ENCODE measurements at regions of chr6 and their contacts with region 1.

Region 1: GRCh38 chr6:109526905-109527628 is 44.0 kb upstream of the ZBTB24 start:
- DNase-seq: no peak
- ATAC-seq: peak in 2 of 4 donors; percentile 35 to 57
- H3K4me3 ChIP-seq: no peak overlapping the region
- H3K27ac ChIP-seq: no peak overlapping the region
- H3K4me1 ChIP-seq: no peaks in the 10 kb centered on the region
- H3K27me3 ChIP-seq: no peaks in the 10 kb centered on the region
- CTCF ChIP-seq: peak; percentile 47

Region 2: DNA sequence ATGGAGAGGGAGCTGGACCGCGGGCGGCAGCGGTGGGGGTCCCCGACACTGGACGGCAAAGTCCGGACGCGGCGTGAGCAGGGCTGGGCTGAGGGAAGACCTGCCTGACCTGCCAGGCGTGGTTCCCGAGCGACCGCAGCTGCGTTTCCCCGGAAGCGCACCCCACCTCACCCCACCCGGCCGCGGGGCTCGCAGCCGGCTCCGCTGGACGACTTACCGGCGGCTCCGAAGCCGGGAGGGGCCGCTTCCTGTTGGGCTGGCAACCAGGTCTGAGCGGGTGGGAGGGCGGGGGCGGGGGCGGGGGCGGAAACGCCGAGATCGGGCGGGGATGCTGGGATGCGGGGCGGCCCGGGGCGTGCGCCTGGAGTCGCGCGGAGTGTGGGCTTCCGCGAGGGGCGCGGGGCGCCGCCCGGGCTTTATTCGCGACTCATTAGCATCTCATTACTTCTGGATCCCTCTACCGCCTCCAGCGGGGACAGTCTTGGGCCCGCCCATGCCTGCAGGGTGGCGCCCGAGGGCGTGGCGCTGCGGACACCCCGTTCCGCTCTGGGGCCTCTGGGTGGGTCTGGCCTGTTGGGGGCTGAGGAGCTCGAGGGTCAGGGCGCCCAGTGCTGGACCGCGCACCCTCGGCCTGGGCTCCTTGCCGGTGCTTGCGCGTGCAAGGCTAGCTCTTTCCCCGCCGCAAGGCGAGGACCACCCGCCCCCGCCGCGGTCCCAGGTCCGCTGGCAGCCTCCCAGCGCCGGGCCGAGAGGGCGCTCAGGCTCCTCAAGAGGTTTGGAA is 71.4 kb before region 1 on chr6 and contains the start of gene MICAL1:
- intact Hi-C with region 1: no loop called
- DNase-seq: peak; percentile 76 to 85
- ATAC-seq: peak; percentile 70 to 79 (median 78)
- H3K4me3 ChIP-seq: peak within 1 kb of the TSS; percentile 93
- H3K27ac ChIP-seq: peak within 1 kb of the TSS; percentile 83
- H3K4me1 ChIP-seq: peaks cover 25% of the 10 kb centered on the region
- H3K27me3 ChIP-seq: no peaks in the 10 kb centered on the region
- CTCF ChIP-seq: peak; percentile 35
- total RNA-seq, gene MICAL1: 3.1 to 7.0 (median 6.0) TPM

Region 3: DNA sequence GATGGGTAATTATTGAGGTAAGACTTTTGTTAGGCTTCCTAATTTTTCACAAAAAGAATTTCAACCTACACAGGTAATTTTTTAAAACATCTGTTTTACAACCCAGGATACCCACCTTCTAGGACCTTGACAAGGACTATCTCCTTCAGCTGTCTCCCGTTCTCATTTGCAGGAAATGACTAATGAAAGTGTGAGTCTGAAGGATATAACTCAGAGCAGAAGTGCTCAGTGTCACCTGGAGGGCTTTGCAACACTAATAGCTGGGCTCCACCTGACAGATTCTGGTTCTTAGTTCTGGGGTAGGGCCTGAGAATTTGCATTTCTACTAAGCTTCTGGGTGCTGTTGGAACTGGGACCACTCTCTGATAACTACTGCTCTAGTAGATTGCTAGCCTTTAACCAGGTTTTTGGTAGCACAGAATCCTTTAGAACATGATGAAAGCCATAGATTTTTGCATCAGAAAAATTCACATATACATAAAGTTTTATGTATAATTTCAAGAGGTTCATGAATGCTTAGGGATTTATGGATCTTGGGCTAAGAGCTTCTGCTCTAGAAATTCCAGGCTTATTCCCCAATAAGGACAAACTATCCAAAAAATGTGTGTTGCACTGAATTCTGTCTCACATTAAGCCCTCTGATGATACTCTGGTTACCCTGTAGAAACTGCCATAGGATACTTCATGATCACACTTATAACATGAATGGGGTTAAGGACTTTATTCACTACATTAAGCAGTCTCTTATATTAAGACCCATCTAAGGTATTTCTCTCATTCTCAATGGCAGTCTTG is 133.7 kb after region 1 on chr6:
- intact Hi-C with region 1: no loop called
- DNase-seq: no peak
- ATAC-seq: no peak
- H3K4me3 ChIP-seq: no peak overlapping the region
- H3K27ac ChIP-seq: no peak overlapping the region
- H3K4me1 ChIP-seq: no peaks in the 10 kb centered on the region
- H3K27me3 ChIP-seq: no peaks in the 10 kb centered on the region
- CTCF ChIP-seq: no peak

Region 4: DNA sequence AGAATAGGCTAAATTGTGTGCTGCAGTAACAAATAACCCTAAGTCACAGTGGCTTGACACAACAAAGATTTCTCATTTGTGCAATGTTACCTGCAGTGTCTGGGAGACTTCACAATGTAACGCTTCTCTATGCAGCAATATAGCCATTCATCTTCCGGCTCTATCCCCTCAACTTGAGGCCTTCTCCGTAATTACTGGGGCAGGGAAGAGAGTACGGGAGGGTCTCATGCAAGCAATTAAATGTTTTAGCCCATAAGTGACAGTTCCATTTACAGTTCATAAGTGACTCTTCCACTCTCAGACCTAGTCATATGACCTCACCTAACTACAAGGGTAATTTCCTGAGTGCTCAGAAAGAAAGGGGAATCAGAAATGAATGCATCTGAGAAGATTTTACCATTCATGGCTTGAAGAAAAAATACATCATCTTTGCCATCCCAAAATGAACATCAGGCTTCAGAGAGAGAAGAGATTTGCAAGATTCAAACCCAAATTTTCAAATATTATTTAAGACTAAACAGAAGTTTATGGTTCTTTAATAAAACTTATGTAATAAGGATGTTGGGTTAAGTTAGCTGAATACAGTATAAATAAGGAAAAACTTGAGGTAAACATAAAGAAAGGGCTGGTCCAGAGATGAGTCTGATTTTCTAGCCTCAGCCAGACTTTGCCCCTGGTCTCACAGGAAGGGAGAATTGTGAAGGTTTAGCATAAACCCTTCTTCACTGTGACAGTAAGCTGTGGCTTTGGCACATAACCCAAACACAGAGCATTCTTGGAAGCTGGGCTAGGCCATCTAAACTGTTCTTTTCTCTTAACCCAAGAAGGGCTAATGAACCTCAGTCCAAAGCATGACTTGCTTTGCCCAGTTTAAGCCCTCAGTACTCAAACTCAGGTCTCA is 464.4 kb after region 1 on chr6:
- intact Hi-C with region 1: no loop called
- DNase-seq: no peak
- ATAC-seq: no peak
- H3K4me3 ChIP-seq: no peak overlapping the region
- H3K27ac ChIP-seq: no peak overlapping the region
- H3K4me1 ChIP-seq: no peaks in the 10 kb centered on the region
- H3K27me3 ChIP-seq: peaks cover 0 to 3% (median 0%) of the 10 kb centered on the region in 3 donors
- CTCF ChIP-seq: no peak

Region 5: GRCh38 chr6:110039364-110039980 is 512.4 kb after region 1 on chr6:
- intact Hi-C with region 1: loop called in 1 of 2 experiments (anchors 5 kb)
- DNase-seq: peak; percentile 84 to 85
- ATAC-seq: peak; percentile 79 to 87 (median 84)
- H3K4me3 ChIP-seq: no peak overlapping the region
- H3K27ac ChIP-seq: no peak overlapping the region
- H3K4me1 ChIP-seq: no peaks in the 10 kb centered on the region
- H3K27me3 ChIP-seq: no peaks in the 10 kb centered on the region
- CTCF ChIP-seq: peak; percentile 83

Region 6: GRCh38 chr6:110053395-110054240 is 526.6 kb after region 1 on chr6:
- intact Hi-C with region 1: loop called in 1 of 2 experiments (anchors 10 kb)
- DNase-seq: no peak
- ATAC-seq: no peak
- H3K4me3 ChIP-seq: no peak overlapping the region
- H3K27ac ChIP-seq: no peak overlapping the region
- H3K4me1 ChIP-seq: no peaks in the 10 kb centered on the region
- H3K27me3 ChIP-seq: no peaks in the 10 kb centered on the region
- CTCF ChIP-seq: peak; percentile 55